Heart left ventricle (tissue), 16 donors: ENCODE measurements at regions of chr9 and their contacts with region 1.

Region 1: DNA sequence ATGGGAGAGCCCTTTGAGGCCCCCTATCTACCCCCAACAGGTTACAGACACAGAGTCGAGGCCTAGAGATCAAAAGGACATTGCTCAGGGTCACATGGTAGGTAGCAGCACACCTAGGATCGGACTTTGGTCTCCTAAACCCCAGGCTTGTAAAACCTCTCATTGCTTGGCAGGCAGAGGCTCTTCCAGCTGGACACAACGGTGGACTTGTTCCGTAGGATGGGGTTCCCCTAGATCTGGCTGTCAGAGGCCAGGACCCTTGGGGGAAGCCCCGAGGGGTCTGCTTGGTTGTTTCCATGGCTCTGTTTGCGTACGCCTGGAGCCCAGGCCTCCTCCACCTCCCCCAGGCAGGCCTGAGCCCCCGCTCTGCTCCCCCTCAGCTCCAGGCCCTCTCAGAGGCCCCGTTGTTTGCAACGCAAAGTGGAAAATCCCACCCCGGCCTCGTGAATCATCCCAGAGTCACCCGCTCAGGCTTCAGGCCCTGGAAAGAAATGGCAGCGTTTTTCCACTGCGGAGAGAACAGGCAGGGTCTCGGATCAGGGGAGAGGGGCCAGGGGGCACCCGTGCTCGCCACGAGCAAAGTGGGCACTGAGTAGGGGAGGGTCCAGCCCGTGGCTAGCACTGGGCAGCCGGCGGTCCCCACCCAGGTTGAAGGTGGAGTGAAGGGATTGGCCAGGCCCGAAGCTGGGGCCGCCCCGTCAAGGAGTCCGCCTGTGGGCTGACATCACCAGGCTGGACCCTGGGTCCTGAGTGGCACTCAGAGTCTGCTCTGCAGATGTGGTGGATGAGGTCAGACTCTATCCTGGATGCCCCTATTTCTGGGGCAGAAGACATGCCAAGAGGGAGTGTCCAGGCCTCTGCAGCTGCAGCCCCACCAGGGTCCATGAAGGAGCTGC is 19.8 kb downstream of the COL27A1 start:
- DNase-seq: peak in 4 of 5 donors; percentile 67 to 83 (median 75)
- ATAC-seq: peak; percentile 68 to 79 (median 78)
- H3K4me3 ChIP-seq: no peak overlapping the region
- H3K27ac ChIP-seq: peak overlapping the region; percentile 9 to 92 (median 84)
- H3K4me1 ChIP-seq: peaks cover 3 to 79% (median 57%) of the 10 kb centered on the region in 12 donors
- H3K27me3 ChIP-seq: no peaks in the 10 kb centered on the region
- CTCF ChIP-seq: no peak
- POLR2A ChIP-seq: no peak

Region 2: DNA sequence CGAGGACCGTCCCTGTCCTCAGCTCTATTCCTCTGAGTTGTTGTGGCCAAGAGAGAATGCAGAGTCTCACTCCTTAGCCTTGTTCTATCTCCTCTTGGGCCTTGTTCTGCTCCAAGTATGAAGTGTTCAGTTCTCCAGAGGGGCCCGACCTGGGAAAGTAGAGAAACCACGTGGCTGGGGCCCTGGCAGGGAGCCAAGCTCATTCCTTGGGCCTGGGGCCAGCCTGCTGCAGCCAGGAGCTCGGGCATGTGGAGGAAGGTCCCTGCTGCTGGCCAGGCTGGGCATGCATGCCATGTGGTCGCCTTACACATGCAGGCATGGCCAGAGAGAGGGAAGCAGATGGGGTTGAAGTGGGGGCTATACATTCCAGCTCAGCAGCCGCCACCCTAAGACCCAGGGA is 41.0 kb after region 1 on chr9:
- intact Hi-C with region 1: loop called in 3 of 10 experiments (anchors 2 to 5 kb)
- DNase-seq: peak; percentile 62 to 77 (median 70)
- ATAC-seq: peak; percentile 56 to 82 (median 62)
- H3K4me3 ChIP-seq: no peak overlapping the region
- H3K27ac ChIP-seq: peak overlapping the region in 6 of 12 donors; percentile 23 to 59 (median 36)
- H3K4me1 ChIP-seq: peaks cover 0 to 41% (median 20%) of the 10 kb centered on the region in 12 donors
- H3K27me3 ChIP-seq: no peaks in the 10 kb centered on the region
- CTCF ChIP-seq: no peak
- POLR2A ChIP-seq: no peak

Region 3: DNA sequence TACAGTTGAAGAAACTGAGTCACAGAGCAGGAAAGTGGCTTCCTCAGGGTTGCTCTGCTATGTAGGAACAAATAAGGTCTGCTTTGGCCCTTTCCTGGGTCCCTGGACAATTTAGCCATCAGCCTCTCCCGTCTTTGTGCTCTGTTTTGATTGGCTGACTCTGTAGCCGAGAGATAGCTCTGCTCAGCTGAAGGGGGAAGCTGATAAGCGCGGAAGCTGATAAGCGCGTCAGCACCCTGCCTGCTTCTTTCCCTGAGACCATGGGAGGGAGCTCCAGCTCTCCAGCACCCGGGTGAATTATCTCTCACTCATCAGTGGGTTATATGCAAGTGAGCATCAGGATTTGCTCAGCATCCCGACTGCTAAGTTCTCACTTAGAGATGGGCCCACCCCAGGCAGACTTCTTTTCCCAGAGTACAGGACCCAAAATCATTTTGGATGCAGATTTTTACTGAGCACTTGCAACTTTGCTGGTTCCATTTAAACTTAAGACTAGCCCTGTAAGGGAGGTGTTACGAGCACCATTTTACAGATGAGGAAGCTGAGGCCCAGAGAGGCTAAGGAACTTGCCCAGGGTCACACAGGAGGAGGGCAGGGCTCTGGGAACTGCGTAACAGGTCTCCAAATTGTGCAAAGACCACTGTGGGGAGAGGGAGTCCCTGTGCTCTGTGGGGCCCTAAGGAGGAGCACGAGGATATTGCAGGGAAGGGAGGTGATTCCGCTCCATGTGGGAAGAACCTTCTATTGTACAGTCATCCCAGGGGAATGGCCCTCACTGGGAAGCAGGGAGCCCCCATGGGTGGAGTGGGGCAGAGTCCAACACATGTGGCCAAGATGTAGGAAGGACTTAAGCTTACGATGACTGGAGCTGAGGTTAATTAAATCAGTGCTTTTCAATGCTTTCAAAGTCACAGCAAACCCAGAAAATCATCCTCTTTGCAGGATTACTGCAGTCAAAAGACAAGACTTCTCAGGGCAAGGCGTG is 64.1 kb after region 1 on chr9:
- intact Hi-C with region 1: loop called in 1 of 10 experiments (anchors 5 kb)
- DNase-seq: peak in 4 of 5 donors; percentile 47 to 66 (median 56)
- ATAC-seq: peak; percentile 54 to 79 (median 68)
- H3K4me3 ChIP-seq: no peak overlapping the region
- H3K27ac ChIP-seq: peak overlapping the region in 8 of 12 donors; percentile 20 to 74 (median 54)
- H3K4me1 ChIP-seq: peaks cover 0 to 46% (median 27%) of the 10 kb centered on the region in 12 donors
- H3K27me3 ChIP-seq: no peaks in the 10 kb centered on the region
- CTCF ChIP-seq: peak in 10 of 12 donors; percentile 17 to 62 (median 34)
- POLR2A ChIP-seq: no peak